MCF 10A (cell line): ENCODE measurements at regions of chr16 and their contacts with region 1.

Region 1: GRCh38 chr16:75506567-75506966 is 11.3 kb upstream of the CHST6 start:
- DNase-seq: peak; percentile 98
- H3K4me3 Mint-ChIP-seq: peak overlapping the region; percentile 42
- H3K27ac Mint-ChIP-seq: peak overlapping the region; percentile 95
- H3K4me1 Mint-ChIP-seq: peaks cover 34% of the 10 kb centered on the region
- H3K27me3 Mint-ChIP-seq: no peaks in the 10 kb centered on the region
- CTCF ChIP-seq: no peak

Region 2: DNA sequence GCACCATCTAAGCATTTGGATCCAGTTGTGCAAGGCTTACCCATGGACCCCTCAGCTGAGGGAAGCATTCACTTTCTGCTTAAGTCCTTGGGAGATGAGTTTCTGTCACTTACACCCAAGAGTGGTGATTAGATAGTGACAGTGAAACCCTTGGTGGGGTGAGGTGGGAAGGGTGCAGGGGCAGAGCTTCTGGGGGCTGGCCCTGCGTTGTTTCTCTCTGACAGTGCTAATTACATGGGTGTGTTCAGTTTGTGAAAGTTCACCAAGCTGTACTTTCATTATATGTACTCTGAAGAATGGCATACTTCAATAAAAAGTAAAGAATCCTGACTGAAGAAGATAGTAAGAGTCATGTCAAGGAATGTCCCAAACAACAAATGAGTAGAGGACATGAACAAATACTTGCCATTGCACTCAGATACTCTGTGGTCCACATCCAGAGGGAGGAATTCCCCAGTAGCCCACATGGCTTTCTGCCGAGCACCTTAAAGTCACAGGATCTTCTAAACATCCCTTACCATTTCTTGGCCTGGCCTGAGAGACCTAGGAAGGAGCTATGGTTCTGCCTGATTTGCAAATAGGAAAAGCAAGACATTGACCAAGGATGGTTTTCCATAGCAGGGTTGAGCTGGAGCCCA is 19.8 kb before region 1 on chr16:
- CTCF ChIA-PET with region 1: no interaction called
- POLR2A ChIA-PET with region 1: interaction called, 11 read pairs
- intact Hi-C with region 1: no loop called
- DNase-seq: no peak
- H3K4me3 Mint-ChIP-seq: no peak overlapping the region
- H3K27ac Mint-ChIP-seq: peak overlapping the region; percentile 70
- H3K4me1 Mint-ChIP-seq: peaks cover 36% of the 10 kb centered on the region
- H3K27me3 Mint-ChIP-seq: no peaks in the 10 kb centered on the region
- CTCF ChIP-seq: no peak